ENCODE measurements at regions of chr1 and their contacts with region 1.

Region 1: DNA sequence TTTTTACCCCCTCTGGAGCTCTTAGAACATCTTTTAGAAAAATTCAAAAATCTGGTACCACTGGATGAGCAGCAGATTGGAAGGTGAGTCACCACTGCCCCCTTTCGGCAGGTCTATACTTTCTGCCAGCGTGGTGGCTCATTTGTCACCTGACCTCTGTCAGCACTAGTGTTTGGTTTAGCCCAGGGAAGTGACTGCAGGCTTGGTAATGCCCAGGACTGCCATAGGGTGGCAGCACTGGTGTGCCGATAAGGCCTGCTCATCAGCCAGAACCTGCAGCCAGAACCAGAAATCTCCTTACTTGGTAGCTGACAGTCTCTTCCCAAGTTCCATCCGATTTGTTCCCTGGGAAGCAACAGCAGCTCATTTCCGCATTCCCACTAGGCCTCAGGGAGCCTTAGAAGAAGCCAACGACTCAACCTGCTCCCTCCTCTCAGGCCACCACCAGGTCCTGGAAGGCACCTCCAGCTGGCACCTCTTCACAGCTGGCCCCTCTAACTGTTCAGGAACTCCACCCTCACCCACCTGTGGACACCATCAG is 6.8 kb downstream of the SMIM12 start:
- DNase-seq: peak; percentile 77 to 96 (median 87)
- ATAC-seq: peak; percentile 100
- H3K4me3 ChIP-seq: no peak overlapping the region
- H3K4me3 Mint-ChIP-seq: no peak overlapping the region
- H3K27ac ChIP-seq: peak overlapping the region in 1 of 2 experiments; percentile 46
- H3K27ac Mint-ChIP-seq: peak overlapping the region; percentile 7
- H3K4me1 ChIP-seq: peaks cover 2% of the 10 kb centered on the region
- H3K4me1 Mint-ChIP-seq: peaks cover 23% of the 10 kb centered on the region
- H3K27me3 ChIP-seq: no peaks in the 10 kb centered on the region
- H3K27me3 Mint-ChIP-seq: no peaks in the 10 kb centered on the region
- CTCF ChIP-seq: peak; percentile 99

Region 2: DNA sequence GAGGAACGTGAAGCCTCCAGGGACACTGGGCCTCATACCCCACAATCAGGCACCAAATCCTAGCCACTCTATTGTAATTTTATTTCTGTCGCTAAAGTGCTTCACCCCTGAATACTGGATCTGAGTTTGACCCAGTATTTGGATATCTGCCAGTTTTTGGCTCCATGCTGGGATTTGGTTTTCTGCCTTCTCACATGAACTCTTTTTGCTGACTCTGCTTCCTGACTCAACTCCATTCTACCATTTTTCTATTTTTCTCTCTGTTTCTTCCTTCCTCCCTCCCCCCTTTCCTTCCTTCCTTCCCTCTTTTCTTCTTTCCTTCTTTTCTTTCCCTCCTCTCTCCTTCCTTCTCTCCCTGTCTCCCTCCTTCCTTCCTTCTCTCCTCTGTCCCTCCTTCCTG is 249.2 kb before region 1 on chr1:
- CTCF ChIA-PET with region 1: no interaction called
- POLR2A ChIA-PET with region 1: no interaction called
- intact Hi-C with region 1: no loop called
- DNase-seq: no peak
- ATAC-seq: no peak
- H3K4me3 ChIP-seq: no peak overlapping the region
- H3K4me3 Mint-ChIP-seq: no peak overlapping the region
- H3K27ac ChIP-seq: no peak overlapping the region
- H3K27ac Mint-ChIP-seq: no peak overlapping the region
- H3K4me1 ChIP-seq: no peaks in the 10 kb centered on the region
- H3K4me1 Mint-ChIP-seq: no peaks in the 10 kb centered on the region
- H3K27me3 ChIP-seq: no peaks in the 10 kb centered on the region
- H3K27me3 Mint-ChIP-seq: peaks cover 18% of the 10 kb centered on the region
- CTCF ChIP-seq: no peak

Region 3: DNA sequence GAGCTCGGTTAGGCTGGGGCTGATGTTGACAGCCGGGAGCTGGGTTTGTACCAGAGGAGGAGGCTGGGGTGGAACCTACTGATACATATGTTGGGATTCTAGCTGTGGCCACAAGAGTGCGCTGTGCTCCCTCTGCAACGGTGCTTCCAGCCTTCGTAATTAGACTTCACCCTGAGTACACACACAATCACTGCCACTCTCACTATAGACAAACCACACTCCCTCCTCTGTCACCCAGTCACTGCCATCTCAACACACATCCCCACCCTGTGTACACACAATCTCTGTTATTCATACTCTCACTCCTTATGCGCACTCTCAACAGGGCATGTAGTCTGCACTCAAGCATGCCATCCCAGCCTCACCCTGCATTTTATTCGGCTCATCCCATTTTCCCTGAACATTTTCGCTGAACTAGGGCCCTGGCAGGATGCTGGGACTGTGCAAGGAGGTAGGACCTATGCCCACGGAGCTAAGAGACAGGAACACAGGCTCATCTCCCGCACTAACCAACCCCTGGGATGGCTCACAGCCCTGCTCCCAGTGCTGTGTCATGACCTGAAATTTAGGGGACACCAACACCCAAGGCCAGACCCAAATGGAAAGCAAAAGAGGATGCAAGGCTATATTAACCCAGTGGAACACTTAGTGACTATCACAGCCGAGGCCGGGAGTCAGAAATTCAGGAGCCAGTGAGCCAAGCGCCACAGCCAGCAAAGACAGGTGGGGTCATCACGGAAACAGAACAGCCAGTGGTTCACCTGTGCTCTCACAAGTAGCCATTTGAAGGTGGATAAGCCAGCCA is 66.0 kb before region 1 on chr1:
- CTCF ChIA-PET with region 1: interaction called, 5 read pairs
- POLR2A ChIA-PET with region 1: no interaction called
- intact Hi-C with region 1: loop called (anchors 1 kb)
- DNase-seq: peak; percentile 25 to 76 (median 59)
- ATAC-seq: peak; percentile 89
- H3K4me3 ChIP-seq: no peak overlapping the region
- H3K4me3 Mint-ChIP-seq: no peak overlapping the region
- H3K27ac ChIP-seq: no peak overlapping the region
- H3K27ac Mint-ChIP-seq: no peak overlapping the region
- H3K4me1 ChIP-seq: no peaks in the 10 kb centered on the region
- H3K4me1 Mint-ChIP-seq: peaks cover 3% of the 10 kb centered on the region
- H3K27me3 ChIP-seq: peaks cover 9% of the 10 kb centered on the region in 2 experiments
- H3K27me3 Mint-ChIP-seq: peaks cover 51% of the 10 kb centered on the region
- CTCF ChIP-seq: peak; percentile 79

Region 4: GRCh38 chr1:34885405-34886247 is 32.9 kb after region 1 on chr1:
- CTCF ChIA-PET with region 1: interaction called, 9 read pairs
- POLR2A ChIA-PET with region 1: no interaction called
- intact Hi-C with region 1: loop called in 1 of 2 experiments (anchors 1 kb)
- DNase-seq: peak in 7 of 9 experiments; percentile 24 to 64 (median 48)
- ATAC-seq: peak; percentile 62
- H3K4me3 ChIP-seq: peak overlapping the region; percentile 43 to 52
- H3K4me3 Mint-ChIP-seq: peak overlapping the region; percentile 70
- H3K27ac ChIP-seq: no peak overlapping the region
- H3K27ac Mint-ChIP-seq: no peak overlapping the region
- H3K4me1 ChIP-seq: peaks cover 8% of the 10 kb centered on the region
- H3K4me1 Mint-ChIP-seq: peaks cover 3% of the 10 kb centered on the region
- H3K27me3 ChIP-seq: peaks cover 15% of the 10 kb centered on the region in 2 experiments
- H3K27me3 Mint-ChIP-seq: peaks cover 42% of the 10 kb centered on the region
- CTCF ChIP-seq: no peak

Region 5: GRCh38 chr1:34918977-34919561 is 66.3 kb after region 1 on chr1:
- CTCF ChIA-PET with region 1: no interaction called
- POLR2A ChIA-PET with region 1: no interaction called
- intact Hi-C with region 1: no loop called
- DNase-seq: peak in 1 of 9 experiments; percentile 35
- ATAC-seq: no peak
- H3K4me3 ChIP-seq: no peak overlapping the region
- H3K4me3 Mint-ChIP-seq: no peak overlapping the region
- H3K27ac ChIP-seq: no peak overlapping the region
- H3K27ac Mint-ChIP-seq: no peak overlapping the region
- H3K4me1 ChIP-seq: no peaks in the 10 kb centered on the region
- H3K4me1 Mint-ChIP-seq: peaks cover 3% of the 10 kb centered on the region
- H3K27me3 ChIP-seq: peaks cover 2 to 9% of the 10 kb centered on the region in 2 experiments
- H3K27me3 Mint-ChIP-seq: peaks cover 47% of the 10 kb centered on the region
- CTCF ChIP-seq: no peak

Region 6: DNA sequence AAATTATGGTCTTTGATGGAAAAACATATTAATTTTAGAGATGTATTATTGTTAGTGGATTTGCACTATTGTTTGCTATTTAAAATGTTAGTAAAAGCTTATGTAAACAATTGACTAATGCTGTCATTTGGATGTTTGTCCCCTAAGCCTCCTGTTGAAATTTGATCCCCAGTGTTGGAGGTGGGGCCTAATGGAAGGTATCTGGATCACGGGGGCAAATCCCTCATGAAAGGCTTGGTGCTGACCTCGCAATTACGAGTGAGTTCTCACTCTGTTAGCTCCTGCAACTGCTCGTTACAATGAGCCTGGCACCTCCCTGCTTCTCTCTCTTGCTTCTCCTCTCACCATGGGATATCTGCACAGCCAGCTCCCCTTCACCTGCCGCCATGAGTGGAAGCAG is 118.1 kb after region 1 on chr1:
- CTCF ChIA-PET with region 1: no interaction called
- POLR2A ChIA-PET with region 1: no interaction called
- intact Hi-C with region 1: no loop called
- DNase-seq: no peak
- ATAC-seq: no peak
- H3K4me3 ChIP-seq: no peak overlapping the region
- H3K4me3 Mint-ChIP-seq: no peak overlapping the region
- H3K27ac ChIP-seq: no peak overlapping the region
- H3K27ac Mint-ChIP-seq: no peak overlapping the region
- H3K4me1 ChIP-seq: peaks cover 8% of the 10 kb centered on the region
- H3K4me1 Mint-ChIP-seq: peaks cover 10% of the 10 kb centered on the region
- H3K27me3 ChIP-seq: no peaks in the 10 kb centered on the region
- H3K27me3 Mint-ChIP-seq: no peaks in the 10 kb centered on the region
- CTCF ChIP-seq: no peak

Region 7: GRCh38 chr1:34984793-34985608 is 132.3 kb after region 1 on chr1 and contains the start of gene TMEM35B:
- CTCF ChIA-PET with region 1: interaction called, 10 read pairs
- POLR2A ChIA-PET with region 1: no interaction called
- intact Hi-C with region 1: no loop called
- DNase-seq: peak; percentile 55 to 87 (median 82)
- ATAC-seq: peak; percentile 96
- H3K4me3 ChIP-seq: peak within 1 kb of the TSS; percentile 77 to 81
- H3K4me3 Mint-ChIP-seq: peak within 1 kb of the TSS; percentile 99
- H3K27ac ChIP-seq: peak within 1 kb of the TSS; percentile 80 to 87
- H3K27ac Mint-ChIP-seq: peak within 1 kb of the TSS; percentile 98
- H3K4me1 ChIP-seq: peaks cover 28% of the 10 kb centered on the region
- H3K4me1 Mint-ChIP-seq: peaks cover 42% of the 10 kb centered on the region
- H3K27me3 ChIP-seq: no peaks in the 10 kb centered on the region
- H3K27me3 Mint-ChIP-seq: no peaks in the 10 kb centered on the region
- CTCF ChIP-seq: no peak
- total RNA-seq, gene TMEM35B: 1.0 to 2.6 TPM

Region 8: GRCh38 chr1:35298464-35298863 is 445.7 kb after region 1 on chr1:
- CTCF ChIA-PET with region 1: interaction called, 12 read pairs
- POLR2A ChIA-PET with region 1: no interaction called
- intact Hi-C with region 1: loop called (anchors 1 to 5 kb)
- DNase-seq: peak in 7 of 9 experiments; percentile 16 to 72 (median 24)
- ATAC-seq: peak; percentile 96
- H3K4me3 ChIP-seq: no peak overlapping the region
- H3K4me3 Mint-ChIP-seq: no peak overlapping the region
- H3K27ac ChIP-seq: no peak overlapping the region
- H3K27ac Mint-ChIP-seq: peak overlapping the region; percentile 45
- H3K4me1 ChIP-seq: peaks cover 5% of the 10 kb centered on the region
- H3K4me1 Mint-ChIP-seq: peaks cover 14% of the 10 kb centered on the region
- H3K27me3 ChIP-seq: no peaks in the 10 kb centered on the region
- H3K27me3 Mint-ChIP-seq: no peaks in the 10 kb centered on the region
- CTCF ChIP-seq: peak; percentile 59